Posterior cingulate gyrus (tissue), 11 donors: ENCODE measurements at regions of chr1 and their contacts with region 1.

Region 1: GRCh38 chr1:42456010-42456758 is at the starts of genes PPCS and ZMYND12:
- DNase-seq: peak; percentile 72 to 96 (median 80)

Region 2: GRCh38 chr1:42380586-42381279 is 75.5 kb before region 1 on chr1 and contains the start of gene RIMKLA:
- intact Hi-C with region 1: loop called (anchors 10 kb)
- DNase-seq: peak; percentile 22 to 96 (median 74)